T-cell (primary cell): ENCODE measurements at regions of chr21 and their contacts with region 1.

Region 1: GRCh38 chr21:31366825-31367224 is 22.8 kb upstream of the TIAM1 start:
- DNase-seq: no peak
- ATAC-seq: no peak
- H3K4me3 ChIP-seq: no peak overlapping the region
- H3K4me3 Mint-ChIP-seq: no peak overlapping the region
- H3K27ac ChIP-seq: no peak overlapping the region
- H3K27ac Mint-ChIP-seq: no peak overlapping the region
- H3K4me1 ChIP-seq: peaks cover 14 to 33% of the 10 kb centered on the region in 2 experiments
- H3K4me1 Mint-ChIP-seq: peaks cover 33 to 37% (median 34%) of the 10 kb centered on the region in 3 donors
- H3K27me3 ChIP-seq: no peaks in the 10 kb centered on the region
- H3K27me3 Mint-ChIP-seq: no peaks in the 10 kb centered on the region

Region 2: GRCh38 chr21:31382060-31382459 is 15.2 kb after region 1 on chr21:
- CTCF ChIA-PET with region 1: interaction called in 1 of 2 experiments, 12 read pairs
- POLR2A ChIA-PET with region 1: no interaction called
- DNase-seq: no peak
- ATAC-seq: peak in 1 of 4 experiments; percentile 60
- H3K4me3 ChIP-seq: no peak overlapping the region
- H3K4me3 Mint-ChIP-seq: peak overlapping the region in 1 of 3 donors; percentile 42
- H3K27ac ChIP-seq: no peak overlapping the region
- H3K27ac Mint-ChIP-seq: no peak overlapping the region
- H3K4me1 ChIP-seq: peaks cover 0 to 7% of the 10 kb centered on the region in 2 experiments
- H3K4me1 Mint-ChIP-seq: peaks cover 8 to 18% (median 8%) of the 10 kb centered on the region in 3 donors
- H3K27me3 ChIP-seq: no peaks in the 10 kb centered on the region
- H3K27me3 Mint-ChIP-seq: no peaks in the 10 kb centered on the region